ENCODE measurements at regions of chr10 and their contacts with region 1.

Region 1: DNA sequence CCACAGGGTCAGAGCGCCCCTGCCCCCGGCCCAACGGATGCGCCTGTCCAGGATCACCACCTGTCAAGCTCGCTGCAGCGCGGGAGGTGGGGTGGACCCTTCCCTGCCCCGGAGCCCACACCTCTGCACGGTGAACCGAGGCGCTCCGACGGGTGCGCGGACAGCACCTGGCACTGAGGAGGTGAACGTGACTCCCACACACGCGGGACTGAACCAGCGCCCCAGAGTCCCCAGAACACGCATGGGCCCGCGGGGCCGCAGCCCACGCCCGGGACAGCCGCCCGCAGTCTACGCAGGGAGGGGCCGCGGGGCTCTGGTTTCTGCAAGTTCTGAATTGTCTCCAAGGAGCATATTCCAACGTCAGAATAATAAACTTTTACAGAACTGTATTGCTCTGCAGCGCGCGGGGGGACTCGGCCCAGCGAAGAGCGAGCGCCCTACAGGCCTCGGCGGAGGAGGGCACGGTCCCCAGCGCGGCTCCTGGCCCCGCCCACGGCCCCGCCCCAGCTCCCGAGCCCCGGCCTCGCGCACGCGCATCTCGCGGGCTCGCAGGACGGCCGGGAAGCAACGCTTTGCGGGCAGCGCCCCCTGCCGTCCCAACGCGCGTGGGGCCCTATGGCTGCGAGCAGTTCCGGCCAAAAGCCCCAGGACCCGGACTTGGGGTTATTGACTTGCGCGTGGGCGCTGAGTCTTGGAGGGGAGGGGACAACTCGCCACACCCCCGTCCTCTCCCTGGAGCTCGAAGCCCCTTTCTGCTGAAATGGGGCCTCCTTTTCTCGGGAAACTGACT is 29.7 kb downstream of the OAT start:
- DNase-seq: peak; percentile 91
- ATAC-seq: peak; percentile 99
- H3K4me3 Mint-ChIP-seq: no peak overlapping the region
- H3K27ac Mint-ChIP-seq: no peak overlapping the region
- H3K4me1 Mint-ChIP-seq: peaks cover 3% of the 10 kb centered on the region
- H3K27me3 Mint-ChIP-seq: peaks cover 4% of the 10 kb centered on the region
- CTCF ChIP-seq: peak; percentile 89

Region 2: GRCh38 chr10:124000792-124001201 is 388.2 kb before region 1 on chr10:
- CTCF ChIA-PET with region 1: interaction called, 193 read pairs
- POLR2A ChIA-PET with region 1: no interaction called
- intact Hi-C with region 1: no loop called
- DNase-seq: no peak
- ATAC-seq: no peak
- H3K4me3 Mint-ChIP-seq: no peak overlapping the region
- H3K27ac Mint-ChIP-seq: no peak overlapping the region
- H3K4me1 Mint-ChIP-seq: no peaks in the 10 kb centered on the region
- H3K27me3 Mint-ChIP-seq: peaks cover 2% of the 10 kb centered on the region
- CTCF ChIP-seq: no peak

Region 3: DNA sequence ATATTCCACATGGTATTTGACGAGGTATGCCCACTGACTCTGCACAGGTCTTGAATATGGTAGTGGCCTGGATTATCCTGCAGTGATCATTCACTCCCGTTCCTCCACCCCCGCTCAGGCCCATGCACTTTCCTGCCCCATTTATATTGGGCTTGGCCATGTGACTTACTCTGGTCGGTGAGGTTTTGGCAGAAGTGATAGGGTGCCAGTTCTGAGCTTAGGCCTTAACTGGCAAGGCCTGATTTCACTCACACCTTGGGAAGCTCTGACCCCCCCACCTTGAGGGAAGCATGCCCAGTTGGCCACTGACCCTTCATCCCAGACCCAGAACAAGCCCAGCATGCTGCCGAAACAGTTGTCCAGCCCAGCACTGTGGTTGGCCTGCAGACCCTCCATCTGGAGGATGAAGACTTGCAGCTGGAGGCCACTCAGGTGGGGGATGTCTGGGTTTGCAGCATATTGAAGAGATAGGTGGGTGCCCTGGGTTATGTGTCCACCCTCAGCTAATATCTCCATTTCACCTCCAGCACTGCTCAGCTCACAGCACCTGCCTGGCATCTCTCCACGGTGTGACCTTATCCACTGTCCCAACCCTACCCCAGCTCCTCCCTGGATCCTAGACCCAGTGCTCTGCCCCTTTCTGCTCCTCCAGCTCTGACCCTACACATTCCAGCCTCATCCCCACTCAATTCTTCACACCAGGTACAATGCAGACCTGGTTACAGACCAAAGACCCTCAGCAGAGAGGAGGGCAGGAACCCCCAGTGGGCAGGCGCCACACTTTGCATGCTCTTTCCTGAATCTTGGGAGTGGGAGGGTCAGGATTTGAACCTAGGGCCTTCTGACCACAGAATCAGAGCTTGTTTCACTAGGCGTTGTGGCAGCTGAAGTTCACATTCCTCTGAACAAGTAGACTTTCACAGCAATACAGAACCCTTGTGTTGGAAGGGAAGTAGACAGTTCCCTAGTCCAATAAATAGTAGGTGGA is 157.6 kb before region 1 on chr10:
- CTCF ChIA-PET with region 1: interaction called, 25 read pairs
- POLR2A ChIA-PET with region 1: no interaction called
- intact Hi-C with region 1: no loop called
- DNase-seq: peak; percentile 87
- ATAC-seq: peak; percentile 52
- H3K4me3 Mint-ChIP-seq: no peak overlapping the region
- H3K27ac Mint-ChIP-seq: peak overlapping the region; percentile 52
- H3K4me1 Mint-ChIP-seq: peaks cover 2% of the 10 kb centered on the region
- H3K27me3 Mint-ChIP-seq: no peaks in the 10 kb centered on the region
- CTCF ChIP-seq: no peak

Region 4: GRCh38 chr10:124259139-124259825 is 129.7 kb before region 1 on chr10:
- CTCF ChIA-PET with region 1: interaction called, 10 read pairs
- POLR2A ChIA-PET with region 1: no interaction called
- intact Hi-C with region 1: loop called (anchors 10 kb)
- DNase-seq: peak; percentile 46
- ATAC-seq: no peak
- H3K4me3 Mint-ChIP-seq: no peak overlapping the region
- H3K27ac Mint-ChIP-seq: no peak overlapping the region
- H3K4me1 Mint-ChIP-seq: no peaks in the 10 kb centered on the region
- H3K27me3 Mint-ChIP-seq: no peaks in the 10 kb centered on the region
- CTCF ChIP-seq: no peak

Region 5: GRCh38 chr10:124279882-124280281 is 109.1 kb before region 1 on chr10:
- CTCF ChIA-PET with region 1: no interaction called
- POLR2A ChIA-PET with region 1: no interaction called
- intact Hi-C with region 1: no loop called
- DNase-seq: no peak
- ATAC-seq: no peak
- H3K4me3 Mint-ChIP-seq: no peak overlapping the region
- H3K27ac Mint-ChIP-seq: no peak overlapping the region
- H3K4me1 Mint-ChIP-seq: no peaks in the 10 kb centered on the region
- H3K27me3 Mint-ChIP-seq: no peaks in the 10 kb centered on the region
- CTCF ChIP-seq: no peak

Region 6: DNA sequence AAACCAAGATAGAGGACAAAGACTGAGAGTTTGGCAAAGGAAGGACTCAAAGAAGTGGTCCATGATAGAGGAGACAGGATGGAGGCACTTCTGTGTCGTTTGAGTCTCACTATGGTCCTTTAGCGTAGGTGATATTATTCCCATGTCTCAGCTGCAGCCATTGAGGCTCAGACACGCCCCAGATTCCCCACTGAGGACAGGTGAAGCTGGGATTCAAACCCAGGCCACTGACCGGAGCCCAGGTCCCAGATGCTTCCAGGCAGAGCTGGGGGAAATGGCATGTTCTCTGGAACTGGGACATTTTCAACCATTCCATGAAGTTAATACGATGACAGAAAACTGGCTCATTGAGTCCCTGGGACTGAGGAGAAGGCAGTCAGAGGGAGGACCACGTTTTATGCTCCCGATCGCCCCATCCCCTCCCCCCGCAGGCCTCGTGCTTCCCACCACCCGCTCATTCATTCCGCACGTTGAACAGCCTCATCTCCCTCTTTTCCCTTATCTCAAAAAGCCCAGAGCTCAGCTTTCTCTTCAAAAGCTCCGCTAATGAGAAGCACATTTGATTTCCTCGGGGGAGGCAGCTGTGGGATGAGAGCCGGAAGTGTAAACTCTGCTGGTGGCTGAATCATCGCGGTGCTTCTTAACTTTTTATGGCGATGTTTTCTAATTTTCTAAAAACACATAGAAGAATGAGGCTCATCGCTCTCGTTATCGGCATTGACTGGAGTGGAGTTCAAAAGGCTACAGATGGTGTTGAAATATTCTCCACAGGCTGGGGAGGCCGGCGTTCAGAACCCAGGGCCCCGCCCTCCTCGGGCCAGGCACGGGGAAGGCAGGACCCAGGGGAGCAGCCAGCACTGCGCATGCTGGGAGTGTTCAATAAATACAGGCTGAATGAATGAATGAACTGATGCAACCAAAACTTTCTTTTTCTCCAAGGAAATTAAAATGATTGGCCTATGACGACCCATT is 34.3 kb before region 1 on chr10:
- CTCF ChIA-PET with region 1: interaction called, 18 read pairs
- POLR2A ChIA-PET with region 1: no interaction called
- intact Hi-C with region 1: no loop called
- DNase-seq: peak; percentile 59
- ATAC-seq: peak; percentile 96
- H3K4me3 Mint-ChIP-seq: peak overlapping the region; percentile 77
- H3K27ac Mint-ChIP-seq: peak overlapping the region; percentile 82
- H3K4me1 Mint-ChIP-seq: peaks cover 6% of the 10 kb centered on the region
- H3K27me3 Mint-ChIP-seq: no peaks in the 10 kb centered on the region
- CTCF ChIP-seq: no peak

Region 7: GRCh38 chr10:124403548-124403947 is 14.5 kb after region 1 on chr10:
- CTCF ChIA-PET with region 1: interaction called, 39 read pairs
- POLR2A ChIA-PET with region 1: interaction called, 3 read pairs
- intact Hi-C with region 1: no loop called
- DNase-seq: peak; percentile 48
- ATAC-seq: peak; percentile 99
- H3K4me3 Mint-ChIP-seq: no peak overlapping the region
- H3K27ac Mint-ChIP-seq: peak overlapping the region; percentile 51
- H3K4me1 Mint-ChIP-seq: peaks cover 4% of the 10 kb centered on the region
- H3K27me3 Mint-ChIP-seq: no peaks in the 10 kb centered on the region
- CTCF ChIP-seq: peak; percentile 68

Region 8: GRCh38 chr10:124486635-124487034 is 97.6 kb after region 1 on chr10:
- CTCF ChIA-PET with region 1: no interaction called
- POLR2A ChIA-PET with region 1: no interaction called
- intact Hi-C with region 1: no loop called
- DNase-seq: no peak
- ATAC-seq: no peak
- H3K4me3 Mint-ChIP-seq: no peak overlapping the region
- H3K27ac Mint-ChIP-seq: no peak overlapping the region
- H3K4me1 Mint-ChIP-seq: no peaks in the 10 kb centered on the region
- H3K27me3 Mint-ChIP-seq: no peaks in the 10 kb centered on the region
- CTCF ChIP-seq: no peak